Ascending aorta (tissue), 2 donors: ENCODE measurements at regions of chr11 and their contacts with region 1.

Region 1: GRCh38 chr11:118997627-118998387 is at the start of gene CENATAC:
- DNase-seq: peak; percentile 81 to 97
- H3K4me3 ChIP-seq: peak within 1 kb of the TSS; percentile 81 to 91
- H3K27ac ChIP-seq: peak within 1 kb of the TSS; percentile 91 to 93
- H3K4me1 ChIP-seq: peaks cover 9 to 20% of the 10 kb centered on the region in 2 donors
- H3K27me3 ChIP-seq: no peaks in the 10 kb centered on the region
- CTCF ChIP-seq: no peak
- total RNA-seq, gene CENATAC: 67.7 TPM

Region 2: GRCh38 chr11:119018074-119018938 is 20.5 kb after region 1 on chr11 and contains the starts of genes RPS25 and TRAPPC4:
- intact Hi-C with region 1: loop called (anchors 1 kb)
- DNase-seq: peak; percentile 87 to 97
- H3K4me3 ChIP-seq: peak within 1 kb of the TSS; percentile 78 to 89
- H3K27ac ChIP-seq: peak within 1 kb of the TSS; percentile 83 to 96
- H3K4me1 ChIP-seq: peaks cover 7 to 32% of the 10 kb centered on the region in 2 donors
- H3K27me3 ChIP-seq: no peaks in the 10 kb centered on the region
- CTCF ChIP-seq: peak in 1 of 3 experiments; percentile 15
- total RNA-seq, gene RPS25: 857 TPM
- total RNA-seq, gene TRAPPC4: 41.0 TPM

Region 3: GRCh38 chr11:119030329-119031049 is 32.7 kb after region 1 on chr11 and contains the start of gene SLC37A4:
- intact Hi-C with region 1: loop called (anchors 2 kb)
- DNase-seq: peak; percentile 94 to 99
- H3K4me3 ChIP-seq: peak within 1 kb of the TSS; percentile 84 to 89
- H3K27ac ChIP-seq: peak within 1 kb of the TSS; percentile 61 to 77
- H3K4me1 ChIP-seq: peaks cover 5 to 13% of the 10 kb centered on the region in 2 donors
- H3K27me3 ChIP-seq: no peaks in the 10 kb centered on the region
- CTCF ChIP-seq: peak; percentile 84 to 90 (median 88)
- total RNA-seq, gene SLC37A4: 21.2 TPM

Region 4: GRCh38 chr11:119067371-119068222 is 69.8 kb after region 1 on chr11 and contains the start of gene VPS11:
- intact Hi-C with region 1: loop called (anchors 2 kb)
- DNase-seq: peak; percentile 89 to 99
- H3K4me3 ChIP-seq: peak within 1 kb of the TSS; percentile 82 to 97
- H3K27ac ChIP-seq: peak within 1 kb of the TSS; percentile 89 to 91
- H3K4me1 ChIP-seq: peaks cover 10 to 28% of the 10 kb centered on the region in 2 donors
- H3K27me3 ChIP-seq: no peaks in the 10 kb centered on the region
- CTCF ChIP-seq: no peak
- total RNA-seq, gene VPS11: 23.4 TPM